ENCODE measurements at regions of chr6 and their contacts with region 1.

Region 1: DNA sequence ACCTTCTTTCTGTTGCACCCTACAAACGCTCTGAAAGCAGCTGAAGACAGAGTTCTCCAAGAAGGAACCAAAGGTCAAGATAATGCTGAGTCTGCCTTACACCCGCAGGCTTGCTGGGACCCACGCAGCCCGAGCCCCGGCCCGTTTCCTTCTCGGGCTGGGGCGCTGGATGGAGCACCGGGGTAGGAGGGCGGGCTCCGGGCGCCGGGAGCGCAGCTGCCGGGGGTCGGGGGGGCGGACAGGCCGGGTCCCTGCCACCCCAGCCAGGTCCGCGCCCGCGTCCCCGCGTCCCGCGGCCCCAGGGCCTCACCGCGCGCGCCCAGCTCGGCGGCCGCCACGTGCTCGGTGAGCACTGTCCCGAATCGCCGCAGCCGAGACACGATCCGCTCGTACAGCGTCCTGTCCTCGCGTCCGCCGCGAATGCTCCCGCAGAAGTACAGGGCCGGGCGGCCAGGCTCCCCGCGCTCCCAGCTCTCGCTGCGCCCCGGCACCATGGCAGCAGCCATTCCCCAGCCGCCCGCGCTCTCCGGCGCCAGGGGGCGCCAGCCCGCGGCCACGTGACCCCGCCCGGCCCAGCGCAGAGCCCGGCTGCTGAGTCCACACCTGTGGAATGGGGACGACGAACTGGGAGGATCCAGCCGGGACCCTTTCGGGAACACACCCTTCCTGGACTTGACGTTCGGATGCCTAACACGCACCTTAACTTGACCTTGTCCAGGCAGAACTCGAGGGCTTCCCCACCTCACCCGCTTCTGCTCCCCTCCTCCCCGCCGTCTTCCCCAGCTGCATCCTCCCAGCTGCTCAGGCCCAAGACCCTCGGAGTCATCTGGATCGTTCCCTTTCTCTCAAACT is at the start of gene DNPH1:
- DNase-seq: peak; percentile 70
- H3K4me3 ChIP-seq: peak within 1 kb of the TSS; percentile 54 to 76 (median 71)
- H3K27ac ChIP-seq: peak within 1 kb of the TSS; percentile 30
- H3K4me1 ChIP-seq: peaks cover 6% of the 10 kb centered on the region
- H3K27me3 ChIP-seq: peaks cover 6 to 10% of the 10 kb centered on the region in 2 experiments
- CTCF ChIP-seq: peak; percentile 80 to 92
- POLR2A ChIP-seq: peak; percentile 77
- total RNA-seq, gene DNPH1: 34.3 and 37.7 TPM in 2 replicates

Region 2: GRCh38 chr6:43053545-43054205 is 175.5 kb before region 1 on chr6 and contains the start of gene CUL7:
- CTCF ChIA-PET with region 1: no interaction called
- POLR2A ChIA-PET with region 1: no interaction called
- dilution Hi-C with region 1: no loop called
- intact Hi-C with region 1: no loop called
- DNase-seq: peak; percentile 95
- H3K4me3 ChIP-seq: peak within 1 kb of the TSS; percentile 30 to 64 (median 40)
- H3K27ac ChIP-seq: peak within 1 kb of the TSS; percentile 82
- H3K4me1 ChIP-seq: peaks cover 16% of the 10 kb centered on the region
- H3K27me3 ChIP-seq: no peaks in the 10 kb centered on the region
- CTCF ChIP-seq: no peak
- POLR2A ChIP-seq: peak; percentile 99
- total RNA-seq, gene CUL7: 29.4 and 29.7 TPM in 2 replicates

Region 3: GRCh38 chr6:43181942-43182860 is 47.0 kb before region 1 on chr6 and contains the start of gene CUL9:
- CTCF ChIA-PET with region 1: interaction called, 10 read pairs
- POLR2A ChIA-PET with region 1: no interaction called
- dilution Hi-C with region 1: no loop called
- intact Hi-C with region 1: no loop called
- DNase-seq: peak; percentile 74
- H3K4me3 ChIP-seq: peak within 1 kb of the TSS; percentile 49 to 92 (median 78)
- H3K27ac ChIP-seq: no peak within 1 kb of the TSS
- H3K4me1 ChIP-seq: peaks cover 17% of the 10 kb centered on the region
- H3K27me3 ChIP-seq: no peaks in the 10 kb centered on the region
- CTCF ChIP-seq: no peak
- POLR2A ChIP-seq: peak; percentile 92
- total RNA-seq, gene CUL9: 43.9 and 46.0 TPM in 2 replicates

Region 4: GRCh38 chr6:43240950-43241349 is 11.8 kb after region 1 on chr6:
- CTCF ChIA-PET with region 1: interaction called, 26 read pairs
- POLR2A ChIA-PET with region 1: no interaction called
- dilution Hi-C with region 1: no loop called
- intact Hi-C with region 1: no loop called
- DNase-seq: no peak
- H3K4me3 ChIP-seq: no peak overlapping the region
- H3K27ac ChIP-seq: no peak overlapping the region
- H3K4me1 ChIP-seq: no peaks in the 10 kb centered on the region
- H3K27me3 ChIP-seq: peaks cover 49 to 58% of the 10 kb centered on the region in 2 experiments
- CTCF ChIP-seq: no peak
- POLR2A ChIP-seq: no peak

Region 5: DNA sequence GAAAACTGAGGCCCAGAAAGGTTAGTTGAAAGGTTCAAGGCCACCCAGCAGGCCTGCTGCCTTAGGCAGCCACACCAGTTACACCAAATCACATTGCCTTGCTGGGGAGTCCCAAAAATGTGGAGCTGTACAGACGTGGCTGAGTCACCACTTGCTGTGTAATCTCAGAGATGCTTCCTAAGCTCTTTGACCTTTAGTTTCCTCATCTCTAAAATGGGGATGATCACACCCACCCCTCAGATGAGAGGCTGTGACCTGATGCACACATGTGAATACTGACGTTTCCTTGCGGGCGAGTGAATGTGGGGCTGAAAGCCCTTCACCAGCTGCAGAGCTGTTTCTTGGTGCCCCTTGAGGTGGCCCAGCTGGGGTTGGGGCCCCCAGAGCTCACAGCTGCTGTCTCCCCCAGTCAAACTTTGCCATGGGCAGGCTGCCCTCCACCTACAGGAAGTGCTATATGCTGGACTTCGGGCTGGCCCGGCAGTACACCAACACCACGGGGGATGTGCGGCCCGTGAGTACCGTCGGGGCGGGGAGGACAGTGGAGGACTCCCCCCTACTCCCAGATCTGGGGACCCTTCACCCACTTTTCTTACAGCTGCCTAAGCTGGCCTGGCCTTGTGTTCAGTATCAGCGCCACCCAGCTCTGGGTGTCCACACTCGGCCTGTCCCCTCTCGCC is 25.1 kb after region 1 on chr6:
- CTCF ChIA-PET with region 1: interaction called, 26 read pairs
- POLR2A ChIA-PET with region 1: no interaction called
- dilution Hi-C with region 1: no loop called
- intact Hi-C with region 1: no loop called
- DNase-seq: no peak
- H3K4me3 ChIP-seq: no peak overlapping the region
- H3K27ac ChIP-seq: no peak overlapping the region
- H3K4me1 ChIP-seq: no peaks in the 10 kb centered on the region
- H3K27me3 ChIP-seq: peaks cover 7 to 14% of the 10 kb centered on the region in 2 experiments
- CTCF ChIP-seq: no peak
- POLR2A ChIP-seq: no peak

Region 6: DNA sequence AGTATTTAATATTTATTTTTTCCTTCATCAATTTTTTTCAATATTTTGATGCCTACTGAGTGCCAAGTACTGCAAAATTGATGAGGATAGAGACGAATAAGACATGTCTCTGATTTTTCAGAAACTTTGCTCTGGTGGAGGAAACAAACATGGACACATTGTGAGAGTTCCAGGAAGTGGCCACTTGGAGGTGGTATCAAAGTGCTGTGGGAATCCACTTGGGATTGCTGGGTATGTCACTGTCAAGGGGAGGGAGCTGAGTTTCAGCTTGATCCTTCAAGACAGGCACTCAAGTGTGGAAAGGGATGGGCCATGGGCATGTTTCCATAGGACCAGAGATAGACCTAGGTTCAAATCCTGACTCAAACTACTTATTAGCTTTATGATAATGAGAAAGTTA is 173.6 kb after region 1 on chr6:
- CTCF ChIA-PET with region 1: interaction called, 15 read pairs
- POLR2A ChIA-PET with region 1: no interaction called
- dilution Hi-C with region 1: no loop called
- intact Hi-C with region 1: no loop called
- DNase-seq: no peak
- H3K4me3 ChIP-seq: no peak overlapping the region
- H3K27ac ChIP-seq: no peak overlapping the region
- H3K4me1 ChIP-seq: no peaks in the 10 kb centered on the region
- H3K27me3 ChIP-seq: peaks cover 9% of the 10 kb centered on the region in 2 experiments
- CTCF ChIP-seq: no peak
- POLR2A ChIP-seq: no peak